ENCODE measurements at regions of chr3 and their contacts with region 1.

Region 1: GRCh38 chr3:4963669-4964589 is 15.3 kb upstream of the BHLHE40 start:
- DNase-seq: no peak
- H3K4me3 Mint-ChIP-seq: no peak overlapping the region
- H3K27ac Mint-ChIP-seq: no peak overlapping the region
- H3K4me1 Mint-ChIP-seq: peaks cover 25% of the 10 kb centered on the region
- H3K27me3 Mint-ChIP-seq: peaks cover 6% of the 10 kb centered on the region

Region 2: GRCh38 chr3:4751502-4752101 is 212.3 kb before region 1 on chr3:
- CTCF ChIA-PET with region 1: no interaction called
- POLR2A ChIA-PET with region 1: no interaction called
- DNase-seq: no peak
- H3K4me3 Mint-ChIP-seq: no peak overlapping the region
- H3K27ac Mint-ChIP-seq: no peak overlapping the region
- H3K4me1 Mint-ChIP-seq: peaks cover 64% of the 10 kb centered on the region
- H3K27me3 Mint-ChIP-seq: no peaks in the 10 kb centered on the region

Region 3: GRCh38 chr3:4953119-4953518 is 10.8 kb before region 1 on chr3:
- CTCF ChIA-PET with region 1: interaction called, 10 read pairs
- POLR2A ChIA-PET with region 1: no interaction called
- DNase-seq: no peak
- H3K4me3 Mint-ChIP-seq: no peak overlapping the region
- H3K27ac Mint-ChIP-seq: no peak overlapping the region
- H3K4me1 Mint-ChIP-seq: no peaks in the 10 kb centered on the region
- H3K27me3 Mint-ChIP-seq: no peaks in the 10 kb centered on the region

Region 4: DNA sequence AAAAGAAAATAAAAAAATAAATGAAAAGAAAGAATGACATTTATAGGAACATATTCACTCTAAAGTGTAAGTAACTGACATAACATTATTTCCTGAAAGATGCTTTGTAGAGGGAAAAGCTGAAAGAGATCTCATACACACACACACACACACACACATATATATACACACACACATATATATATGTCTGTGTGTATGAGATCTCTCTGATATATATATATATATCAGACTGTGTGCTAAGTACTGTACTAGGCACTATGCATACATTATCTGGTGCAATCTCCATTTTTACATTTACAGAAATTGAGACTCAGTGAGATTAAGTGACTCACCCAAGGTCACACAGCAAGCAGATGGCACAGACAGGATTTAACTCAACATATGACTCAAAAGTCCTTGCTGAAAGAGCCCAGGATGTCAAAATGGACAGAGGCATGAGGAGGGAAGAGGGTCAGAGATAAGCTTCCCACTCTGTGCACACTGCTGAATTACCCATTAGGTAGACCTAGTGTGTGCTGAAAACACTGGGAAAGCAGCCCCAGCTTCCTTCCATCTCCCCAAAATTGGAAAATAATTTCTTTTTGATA is 30.3 kb after region 1 on chr3:
- CTCF ChIA-PET with region 1: no interaction called
- POLR2A ChIA-PET with region 1: no interaction called
- DNase-seq: no peak
- H3K4me3 Mint-ChIP-seq: no peak overlapping the region
- H3K27ac Mint-ChIP-seq: no peak overlapping the region
- H3K4me1 Mint-ChIP-seq: peaks cover 14% of the 10 kb centered on the region
- H3K27me3 Mint-ChIP-seq: no peaks in the 10 kb centered on the region

Region 5: GRCh38 chr3:5057857-5058324 is 94.0 kb after region 1 on chr3:
- CTCF ChIA-PET with region 1: no interaction called
- POLR2A ChIA-PET with region 1: no interaction called
- DNase-seq: peak; percentile 84
- H3K4me3 Mint-ChIP-seq: no peak overlapping the region
- H3K27ac Mint-ChIP-seq: no peak overlapping the region
- H3K4me1 Mint-ChIP-seq: peaks cover 26% of the 10 kb centered on the region
- H3K27me3 Mint-ChIP-seq: peaks cover 7% of the 10 kb centered on the region

Region 6: GRCh38 chr3:5347486-5347885 is 383.6 kb after region 1 on chr3:
- CTCF ChIA-PET with region 1: no interaction called
- POLR2A ChIA-PET with region 1: no interaction called
- DNase-seq: no peak
- H3K4me3 Mint-ChIP-seq: no peak overlapping the region
- H3K27ac Mint-ChIP-seq: no peak overlapping the region
- H3K4me1 Mint-ChIP-seq: no peaks in the 10 kb centered on the region
- H3K27me3 Mint-ChIP-seq: peaks cover 4% of the 10 kb centered on the region

Measured in activated CD4-positive, alpha-beta T cell treated with anti-CD3 and anti-CD28 coated beads, Interleukin-2, amount 10 ng/mL, durations not matched to agents 7 days and 5 days (primary cell).